ENCODE measurements at regions of chr17 and their contacts with region 1.

Region 1: GRCh38 chr17:50114849-50115357 is 15.1 kb downstream of the SAMD14 start:
- DNase-seq: no peak
- ATAC-seq: no peak
- H3K4me3 ChIP-seq: no peak overlapping the region
- H3K27ac ChIP-seq: no peak overlapping the region
- H3K4me1 ChIP-seq: peaks cover 13% of the 10 kb centered on the region
- H3K27me3 ChIP-seq: no peaks in the 10 kb centered on the region

Region 2: GRCh38 chr17:50020841-50021599 is 93.9 kb before region 1 on chr17:
- intact Hi-C with region 1: no loop called
- DNase-seq: no peak
- ATAC-seq: no peak
- H3K4me3 ChIP-seq: no peak overlapping the region
- H3K27ac ChIP-seq: no peak overlapping the region
- H3K4me1 ChIP-seq: no peaks in the 10 kb centered on the region
- H3K27me3 ChIP-seq: no peaks in the 10 kb centered on the region

Region 3: GRCh38 chr17:50161023-50161910 is 46.4 kb after region 1 on chr17:
- intact Hi-C with region 1: loop called in 3 of 4 experiments (anchors 5 to 10 kb)
- DNase-seq: peak; percentile 92 to 97 (median 96)
- ATAC-seq: peak; percentile 92 to 93
- H3K4me3 ChIP-seq: peak overlapping the region; percentile 58
- H3K27ac ChIP-seq: peak overlapping the region; percentile 19
- H3K4me1 ChIP-seq: no peaks in the 10 kb centered on the region
- H3K27me3 ChIP-seq: no peaks in the 10 kb centered on the region

Region 4: DNA sequence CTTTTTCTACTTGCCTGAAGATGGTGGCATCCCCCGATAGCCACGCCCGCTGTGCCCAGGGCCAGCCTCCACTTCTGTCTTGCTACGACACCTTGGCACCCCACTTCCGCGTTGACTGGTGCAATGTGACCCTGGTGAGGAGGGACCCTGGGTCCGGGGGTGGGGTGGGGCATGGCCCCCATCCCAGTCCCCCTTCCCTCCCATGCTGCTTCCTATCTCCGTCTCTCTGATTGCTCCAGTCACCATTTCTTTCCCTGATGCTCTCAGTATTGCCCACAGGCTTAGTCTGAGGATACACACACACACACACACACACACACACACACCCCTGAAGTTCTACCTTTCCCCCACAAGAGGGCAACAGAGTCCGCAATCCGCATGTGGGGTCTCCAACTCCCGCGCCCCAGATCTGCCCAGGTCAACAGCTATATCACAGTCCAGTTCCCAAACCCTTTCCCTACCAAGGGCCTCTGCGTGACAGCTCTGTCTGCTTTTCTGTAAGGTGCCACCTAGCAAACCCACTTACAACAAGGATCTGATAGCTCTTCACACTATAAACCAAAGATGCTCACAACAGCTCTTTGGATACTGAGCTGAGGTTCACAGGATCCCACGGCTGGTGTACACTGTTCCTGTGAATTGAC is 54.3 kb after region 1 on chr17:
- intact Hi-C with region 1: loop called in 3 of 4 experiments (anchors 5 to 10 kb)
- DNase-seq: peak; percentile 52 to 75 (median 65)
- ATAC-seq: peak; percentile 2 to 24
- H3K4me3 ChIP-seq: no peak overlapping the region
- H3K27ac ChIP-seq: no peak overlapping the region
- H3K4me1 ChIP-seq: peaks cover 6% of the 10 kb centered on the region
- H3K27me3 ChIP-seq: no peaks in the 10 kb centered on the region

Measured in right cardiac atrium (tissue), 5 donors.